ENCODE measurements at regions of chr17 and their contacts with region 1.

Region 1: GRCh38 chr17:68794636-68795434 is 160.4 kb downstream of the ABCA8 start:
- DNase-seq: peak; percentile 82
- H3K4me3 ChIP-seq: no peak overlapping the region
- H3K27ac ChIP-seq: peak overlapping the region; percentile 89
- H3K4me1 ChIP-seq: peaks cover 26% of the 10 kb centered on the region
- H3K27me3 ChIP-seq: no peaks in the 10 kb centered on the region
- CTCF ChIP-seq: peak; percentile 18 to 31
- POLR2A ChIP-seq: no peak

Region 2: DNA sequence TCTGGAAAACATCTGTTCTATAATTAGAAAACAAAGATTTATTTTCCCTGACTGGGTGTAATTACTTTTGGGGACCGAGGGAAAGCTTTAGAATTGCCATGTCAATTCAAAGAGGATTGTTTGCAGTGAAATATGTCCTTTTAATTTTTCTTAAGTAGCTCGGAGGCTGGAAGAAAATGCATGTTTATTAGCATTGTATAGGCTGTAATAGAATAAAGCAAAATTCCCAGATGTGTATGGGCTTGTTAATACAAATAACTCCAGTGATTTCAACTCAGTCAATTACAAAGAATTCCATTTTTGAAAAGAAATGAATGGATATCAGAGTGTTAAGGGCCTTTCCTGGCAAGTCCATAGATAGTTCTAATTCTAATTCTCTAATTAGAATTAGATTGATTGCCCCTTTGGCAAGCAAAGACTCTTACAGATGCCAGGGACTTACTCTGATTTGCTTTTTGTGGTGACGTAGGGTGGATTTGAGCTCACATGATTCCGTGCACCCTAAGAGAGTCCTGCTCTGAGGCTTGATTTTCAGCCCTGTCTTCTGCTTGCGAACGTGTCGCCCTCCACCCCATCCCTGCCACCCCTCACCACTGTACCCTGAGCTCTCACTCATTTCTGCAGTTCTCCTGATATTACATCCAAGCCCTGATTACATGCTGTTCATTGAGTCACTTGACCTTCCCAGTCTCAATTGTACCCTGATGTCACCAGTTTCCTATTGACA is 123.7 kb before region 1 on chr17:
- CTCF ChIA-PET with region 1: no interaction called
- POLR2A ChIA-PET with region 1: no interaction called
- dilution Hi-C with region 1: no loop called
- intact Hi-C with region 1: no loop called
- DNase-seq: no peak
- H3K4me3 ChIP-seq: no peak overlapping the region
- H3K27ac ChIP-seq: no peak overlapping the region
- H3K4me1 ChIP-seq: no peaks in the 10 kb centered on the region
- H3K27me3 ChIP-seq: peaks cover 4% of the 10 kb centered on the region in 2 experiments
- CTCF ChIP-seq: no peak
- POLR2A ChIP-seq: no peak

Region 3: DNA sequence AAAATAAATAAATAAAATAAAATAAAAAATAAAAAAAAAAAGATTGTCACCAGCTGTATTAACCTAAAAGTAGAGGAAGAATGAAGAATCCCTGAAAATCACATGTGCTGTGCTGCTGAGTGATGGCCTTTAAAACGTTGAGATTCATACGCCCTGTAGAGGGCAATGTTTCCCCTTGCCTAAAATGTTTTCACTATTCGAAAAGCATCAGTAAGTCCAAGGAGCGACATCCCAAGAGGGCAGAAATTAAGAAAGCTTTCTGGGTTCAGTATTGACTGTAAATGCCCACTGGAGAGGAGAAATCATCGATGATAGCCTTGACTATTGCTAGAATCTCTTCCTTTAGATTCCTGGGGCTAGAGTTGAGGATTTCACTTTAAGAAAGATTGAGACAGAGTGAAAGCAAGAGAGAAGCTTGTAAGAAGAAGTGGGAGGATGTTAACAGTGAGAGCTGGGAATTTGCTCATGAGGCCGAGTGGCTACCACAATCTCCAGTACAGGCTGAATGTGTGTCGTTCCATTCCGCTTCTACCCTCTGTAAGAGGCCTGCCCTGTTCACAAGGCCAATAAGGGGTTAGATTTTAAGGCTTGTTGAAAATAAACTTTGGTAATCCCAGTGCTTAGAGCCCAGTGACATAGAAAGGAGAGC is 22.8 kb before region 1 on chr17:
- CTCF ChIA-PET with region 1: interaction called, 40 read pairs
- POLR2A ChIA-PET with region 1: no interaction called
- dilution Hi-C with region 1: no loop called
- intact Hi-C with region 1: loop called (anchors 1 kb)
- DNase-seq: peak; percentile 82
- H3K4me3 ChIP-seq: no peak overlapping the region
- H3K27ac ChIP-seq: no peak overlapping the region
- H3K4me1 ChIP-seq: peaks cover 23% of the 10 kb centered on the region
- H3K27me3 ChIP-seq: no peaks in the 10 kb centered on the region
- CTCF ChIP-seq: peak; percentile 51 to 59
- POLR2A ChIP-seq: no peak

Region 4: GRCh38 chr17:68821860-68822696 is 27.2 kb after region 1 on chr17:
- CTCF ChIA-PET with region 1: interaction called, 9 read pairs
- POLR2A ChIA-PET with region 1: no interaction called
- dilution Hi-C with region 1: no loop called
- intact Hi-C with region 1: loop called (anchors 1 kb)
- DNase-seq: peak; percentile 91
- H3K4me3 ChIP-seq: peak overlapping the region in 1 of 3 experiments; percentile 4
- H3K27ac ChIP-seq: peak overlapping the region; percentile 74
- H3K4me1 ChIP-seq: peaks cover 22% of the 10 kb centered on the region
- H3K27me3 ChIP-seq: no peaks in the 10 kb centered on the region
- CTCF ChIP-seq: no peak
- POLR2A ChIP-seq: no peak

Region 5: DNA sequence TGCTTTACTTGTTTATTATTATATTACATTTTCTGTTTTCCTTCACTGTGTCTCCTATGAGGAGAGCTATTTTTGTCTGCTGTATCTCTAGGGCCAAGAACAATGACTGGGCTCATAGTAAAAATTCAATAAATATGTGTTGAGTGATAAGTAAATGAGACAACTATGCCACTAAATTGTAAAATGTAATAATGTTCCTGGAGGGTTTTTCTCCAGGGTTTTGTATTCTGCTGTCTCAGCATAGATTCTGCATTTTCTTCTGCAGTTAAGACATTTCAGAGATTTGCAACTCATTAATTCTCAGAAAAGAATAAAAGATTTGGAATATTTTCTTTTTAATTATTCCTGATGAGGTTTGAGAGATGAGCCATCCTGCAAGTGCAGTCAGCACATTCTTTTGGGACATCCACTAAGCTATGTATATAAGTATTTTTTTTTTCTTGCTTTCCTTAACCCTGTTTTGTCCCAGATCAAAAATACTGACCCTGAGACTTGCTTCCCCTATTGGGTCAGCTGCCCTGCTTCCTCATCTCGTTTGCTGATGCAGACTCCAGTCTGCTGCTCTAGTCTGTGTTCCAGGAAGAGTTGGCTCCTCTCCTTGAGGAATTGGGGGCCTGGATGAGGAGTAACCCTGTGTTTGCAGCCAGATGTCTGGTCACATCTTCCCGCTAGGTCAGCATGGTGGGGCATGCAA is 37.4 kb after region 1 on chr17:
- CTCF ChIA-PET with region 1: no interaction called
- POLR2A ChIA-PET with region 1: no interaction called
- dilution Hi-C with region 1: no loop called
- intact Hi-C with region 1: no loop called
- DNase-seq: no peak
- H3K4me3 ChIP-seq: no peak overlapping the region
- H3K27ac ChIP-seq: no peak overlapping the region
- H3K4me1 ChIP-seq: peaks cover 4% of the 10 kb centered on the region
- H3K27me3 ChIP-seq: no peaks in the 10 kb centered on the region
- CTCF ChIP-seq: no peak
- POLR2A ChIP-seq: no peak

Region 6: GRCh38 chr17:68909066-68909465 is 114.2 kb after region 1 on chr17:
- CTCF ChIA-PET with region 1: interaction called, 23 read pairs
- POLR2A ChIA-PET with region 1: interaction called, 3 read pairs
- dilution Hi-C with region 1: no loop called
- intact Hi-C with region 1: loop called (anchors 1 kb)
- DNase-seq: peak; percentile 93
- H3K4me3 ChIP-seq: no peak overlapping the region
- H3K27ac ChIP-seq: peak overlapping the region; percentile 66
- H3K4me1 ChIP-seq: peaks cover 13% of the 10 kb centered on the region
- H3K27me3 ChIP-seq: no peaks in the 10 kb centered on the region
- CTCF ChIP-seq: no peak
- POLR2A ChIP-seq: no peak

Region 7: GRCh38 chr17:69235338-69235930 is 440.6 kb after region 1 on chr17:
- CTCF ChIA-PET with region 1: interaction called, 11 read pairs
- POLR2A ChIA-PET with region 1: no interaction called
- dilution Hi-C with region 1: no loop called
- intact Hi-C with region 1: loop called (anchors 1 kb)
- DNase-seq: peak; percentile 90
- H3K4me3 ChIP-seq: no peak overlapping the region
- H3K27ac ChIP-seq: peak overlapping the region; percentile 24
- H3K4me1 ChIP-seq: peaks cover 4% of the 10 kb centered on the region
- H3K27me3 ChIP-seq: no peaks in the 10 kb centered on the region
- CTCF ChIP-seq: peak; percentile 67 to 68
- POLR2A ChIP-seq: no peak

Measured in endothelial cell of umbilical vein (primary cell).